ENCODE measurements at regions of chr2 and their contacts with region 1.

Region 1: DNA sequence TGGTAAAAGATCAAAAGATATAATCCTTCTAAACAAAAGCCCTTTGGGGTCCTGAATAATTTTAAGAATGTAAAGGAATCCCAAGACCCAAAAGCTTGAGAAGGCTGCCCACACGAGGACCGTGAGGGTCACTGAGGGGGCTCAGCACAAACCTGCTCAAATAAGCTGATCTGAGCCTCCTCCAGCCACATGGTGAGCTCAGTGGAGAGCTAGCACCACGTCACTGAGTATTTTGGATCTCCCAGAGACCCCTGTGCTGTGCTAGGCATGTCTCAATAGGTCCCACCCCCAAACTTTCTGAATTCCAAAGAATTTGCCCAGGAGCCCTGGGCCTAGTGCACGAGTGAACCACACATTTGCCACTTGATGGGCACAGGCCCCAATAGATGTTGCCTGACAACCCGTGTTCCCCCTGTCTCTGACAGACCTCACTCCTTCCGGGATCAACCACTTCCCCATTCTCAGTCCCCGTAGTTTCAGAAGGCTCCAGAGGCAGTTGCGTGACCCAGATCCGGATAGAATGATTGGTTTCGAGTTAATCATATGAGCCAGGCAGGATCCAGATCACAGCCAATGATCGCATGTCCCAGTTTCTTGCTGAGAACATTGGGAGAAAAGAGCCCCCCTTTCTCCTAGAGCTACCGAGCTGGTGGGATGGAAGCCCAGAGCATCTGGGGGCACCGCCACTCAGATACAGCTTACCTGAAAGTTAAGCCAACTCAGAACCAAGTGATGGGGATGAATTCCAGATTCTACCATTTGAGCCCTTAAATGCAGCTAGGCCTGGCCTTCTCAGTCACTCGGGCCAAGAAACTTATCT is 203.8 kb downstream of the TNS1 start:
- DNase-seq: peak; percentile 90 to 96 (median 95)
- H3K4me3 ChIP-seq: no peak overlapping the region
- H3K4me3 Mint-ChIP-seq: peak overlapping the region in 1 of 2 donors; percentile 58
- H3K27ac ChIP-seq: peak overlapping the region; percentile 42 to 64
- H3K27ac Mint-ChIP-seq: peak overlapping the region; percentile 51 to 81 (median 75)
- H3K4me1 ChIP-seq: peaks cover 12 to 13% of the 10 kb centered on the region in 2 donors
- H3K4me1 Mint-ChIP-seq: peaks cover 20% of the 10 kb centered on the region
- H3K27me3 ChIP-seq: no peaks in the 10 kb centered on the region
- H3K27me3 Mint-ChIP-seq: peaks cover 1 to 10% (median 4%) of the 10 kb centered on the region in 3 donors
- CTCF ChIP-seq: no peak

Region 2: GRCh38 chr2:217610401-217611075 is 188.4 kb before region 1 on chr2:
- intact Hi-C with region 1: no loop called
- DNase-seq: no peak
- H3K4me3 ChIP-seq: no peak overlapping the region
- H3K4me3 Mint-ChIP-seq: peak overlapping the region in 1 of 2 donors; percentile 33
- H3K27ac ChIP-seq: no peak overlapping the region
- H3K27ac Mint-ChIP-seq: no peak overlapping the region
- H3K4me1 ChIP-seq: no peaks in the 10 kb centered on the region
- H3K4me1 Mint-ChIP-seq: peaks cover 3% of the 10 kb centered on the region
- H3K27me3 ChIP-seq: no peaks in the 10 kb centered on the region
- H3K27me3 Mint-ChIP-seq: peaks cover 5 to 8% (median 6%) of the 10 kb centered on the region in 3 donors
- CTCF ChIP-seq: no peak

Region 3: DNA sequence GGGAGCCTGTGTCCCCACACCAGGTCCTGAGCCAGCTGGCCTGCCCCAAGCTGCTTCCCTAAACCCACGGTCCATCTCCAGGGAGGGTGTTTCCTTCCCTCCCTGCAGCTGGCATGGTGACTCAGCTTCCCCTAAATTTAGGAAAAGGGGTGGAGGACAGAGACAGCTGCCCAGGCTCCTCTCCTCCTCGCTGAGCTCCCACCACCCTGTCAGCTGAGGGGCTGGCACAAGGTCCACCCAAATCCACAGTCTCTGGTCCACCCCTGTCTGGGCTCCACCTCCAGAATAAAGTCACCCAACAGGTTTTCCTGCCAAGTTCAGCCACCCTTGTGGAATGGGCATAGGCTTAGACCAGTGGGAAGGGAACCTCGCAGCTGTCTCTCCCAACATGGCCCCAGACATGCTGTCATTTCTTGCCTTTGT is 47.4 kb after region 1 on chr2:
- intact Hi-C with region 1: loop called (anchors 5 to 10 kb)
- DNase-seq: peak; percentile 46 to 71 (median 55)
- H3K4me3 ChIP-seq: no peak overlapping the region
- H3K4me3 Mint-ChIP-seq: no peak overlapping the region
- H3K27ac ChIP-seq: no peak overlapping the region
- H3K27ac Mint-ChIP-seq: peak overlapping the region in 1 of 7 donors; percentile 21
- H3K4me1 ChIP-seq: peaks cover 21 to 29% of the 10 kb centered on the region in 2 donors
- H3K4me1 Mint-ChIP-seq: peaks cover 29% of the 10 kb centered on the region
- H3K27me3 ChIP-seq: peaks cover 0 to 14% of the 10 kb centered on the region in 2 donors
- H3K27me3 Mint-ChIP-seq: peaks cover 15 to 39% (median 19%) of the 10 kb centered on the region in 3 donors
- CTCF ChIP-seq: no peak

Region 4: DNA sequence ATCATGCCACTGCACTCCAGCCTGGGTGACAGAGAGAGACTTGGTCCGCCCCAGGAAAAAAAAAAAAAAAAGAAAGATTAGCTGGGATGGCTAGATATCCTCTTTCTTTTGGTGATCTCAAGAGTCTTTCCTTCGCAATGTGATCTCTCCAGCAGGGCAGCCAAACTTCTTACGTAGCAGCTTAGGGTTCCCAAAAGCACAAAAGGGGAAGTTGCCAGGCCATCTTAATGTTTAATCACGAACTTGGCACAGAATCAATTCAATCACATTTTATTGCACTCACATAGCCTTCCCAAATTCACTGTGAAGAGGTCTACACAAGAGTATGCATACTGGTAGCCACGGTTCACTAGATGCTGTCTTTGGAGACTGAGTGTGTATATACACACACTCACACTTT is 673.0 kb after region 1 on chr2:
- intact Hi-C with region 1: loop called in 1 of 2 experiments (anchors 5 kb)
- DNase-seq: peak; percentile 79 to 86 (median 85)
- H3K4me3 ChIP-seq: peak overlapping the region in 1 of 3 experiments; percentile 43
- H3K4me3 Mint-ChIP-seq: peak overlapping the region in 1 of 2 donors; percentile 46
- H3K27ac ChIP-seq: peak overlapping the region in 1 of 2 donors; percentile 63
- H3K27ac Mint-ChIP-seq: peak overlapping the region; percentile 54 to 87 (median 84)
- H3K4me1 ChIP-seq: peaks cover 30 to 31% of the 10 kb centered on the region in 2 donors
- H3K4me1 Mint-ChIP-seq: peaks cover 33% of the 10 kb centered on the region
- H3K27me3 ChIP-seq: no peaks in the 10 kb centered on the region
- H3K27me3 Mint-ChIP-seq: peaks cover 0 to 3% (median 0%) of the 10 kb centered on the region in 3 donors
- CTCF ChIP-seq: no peak